Endothelial cell of umbilical vein (primary cell): ENCODE measurements at regions of chr2 and their contacts with region 1.

Region 1: DNA sequence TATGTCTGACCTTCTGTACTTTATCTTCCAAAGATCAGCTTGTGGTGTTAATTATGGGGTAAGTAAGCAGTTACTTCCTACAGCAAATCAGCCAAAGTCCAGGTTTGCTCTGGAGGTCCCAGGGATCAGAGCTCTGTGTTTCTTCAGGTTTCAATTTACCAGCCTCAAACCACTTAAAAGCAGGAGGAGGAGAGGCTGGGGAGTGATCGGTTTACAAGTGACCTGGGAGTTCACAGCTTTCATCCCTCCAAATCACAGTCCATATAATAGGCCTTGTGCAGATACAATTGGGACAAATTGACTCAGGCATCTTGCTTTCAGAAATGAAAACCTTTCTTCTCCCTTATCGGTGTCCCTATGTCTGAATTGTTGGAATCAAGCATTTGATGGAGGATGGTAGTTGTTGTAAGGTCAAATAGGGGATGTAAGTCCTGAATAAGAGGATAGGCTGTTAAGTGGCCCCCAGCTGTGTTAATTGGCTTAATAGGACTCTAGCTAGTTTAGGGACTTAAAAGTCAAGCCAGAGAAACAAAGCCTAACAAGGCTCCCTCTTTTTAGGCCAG is 188.0 kb upstream of the NT5C1B start:
- DNase-seq: no peak
- H3K4me3 ChIP-seq: no peak overlapping the region
- H3K27ac ChIP-seq: no peak overlapping the region
- H3K4me1 ChIP-seq: no peaks in the 10 kb centered on the region
- H3K27me3 ChIP-seq: no peaks in the 10 kb centered on the region
- CTCF ChIP-seq: no peak
- POLR2A ChIP-seq: no peak

Region 2: GRCh38 chr2:18585526-18585925 is 191.8 kb before region 1 on chr2:
- CTCF ChIA-PET with region 1: no interaction called
- POLR2A ChIA-PET with region 1: no interaction called
- dilution Hi-C with region 1: no loop called
- intact Hi-C with region 1: no loop called
- DNase-seq: peak; percentile 43
- H3K4me3 ChIP-seq: no peak overlapping the region
- H3K27ac ChIP-seq: no peak overlapping the region
- H3K4me1 ChIP-seq: no peaks in the 10 kb centered on the region
- H3K27me3 ChIP-seq: no peaks in the 10 kb centered on the region
- CTCF ChIP-seq: no peak
- POLR2A ChIP-seq: no peak

Region 3: GRCh38 chr2:18749912-18750526 is 27.3 kb before region 1 on chr2:
- CTCF ChIA-PET with region 1: interaction called, 12 read pairs
- POLR2A ChIA-PET with region 1: no interaction called
- dilution Hi-C with region 1: no loop called
- intact Hi-C with region 1: no loop called
- DNase-seq: peak; percentile 42
- H3K4me3 ChIP-seq: no peak overlapping the region
- H3K27ac ChIP-seq: no peak overlapping the region
- H3K4me1 ChIP-seq: no peaks in the 10 kb centered on the region
- H3K27me3 ChIP-seq: no peaks in the 10 kb centered on the region
- CTCF ChIP-seq: peak; percentile 44 to 52
- POLR2A ChIP-seq: no peak